Brain microvascular endothelial cell (primary cell): ENCODE measurements at regions of chr22 and their contacts with region 1.

Region 1: DNA sequence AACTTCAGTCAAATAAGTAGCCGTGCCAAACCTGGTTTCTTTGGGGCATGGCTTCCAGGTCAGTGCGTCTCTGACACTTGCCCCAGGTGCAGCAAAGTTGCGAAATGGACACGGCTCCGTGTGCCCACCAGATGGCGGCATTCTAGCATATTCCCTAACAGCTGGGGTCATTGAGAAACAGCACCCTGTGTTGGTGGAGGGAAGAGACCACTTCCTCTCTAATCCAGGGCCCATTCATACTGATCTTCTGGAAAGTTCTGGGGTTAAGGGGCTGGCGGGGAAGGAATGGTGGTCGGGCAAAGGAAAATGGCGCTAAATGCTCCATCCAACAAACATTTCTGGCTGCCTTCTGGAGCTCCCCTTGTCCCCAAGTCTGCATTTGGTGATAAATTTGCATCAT is 141.2 kb upstream of the TIMP3 start:
- DNase-seq: peak; percentile 47
- H3K4me3 ChIP-seq: no peak overlapping the region
- H3K27ac ChIP-seq: peak overlapping the region; percentile 83
- H3K27me3 ChIP-seq: no peaks in the 10 kb centered on the region
- CTCF ChIP-seq: peak; percentile 86

Region 2: DNA sequence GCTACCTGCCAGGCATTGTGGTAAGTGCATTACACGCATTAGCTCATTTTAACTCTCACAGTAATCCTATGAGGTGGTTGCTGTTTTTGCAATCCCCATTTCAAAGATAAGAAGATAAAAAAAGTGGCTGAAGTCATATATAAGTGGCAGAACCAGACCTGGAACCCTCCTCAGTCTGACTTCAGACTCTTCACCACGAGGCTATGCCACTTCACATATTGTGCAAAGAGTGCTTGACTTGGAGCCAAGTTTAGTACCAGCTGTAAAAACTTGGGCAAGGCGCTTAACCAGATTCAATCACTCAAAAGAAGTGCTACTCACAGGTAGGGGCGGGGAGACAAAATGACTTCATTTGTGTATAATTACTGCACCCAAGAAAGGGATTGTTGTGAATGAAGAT is 211.3 kb before region 1 on chr22:
- in situ Hi-C with region 1: no loop called
- DNase-seq: no peak
- H3K4me3 ChIP-seq: no peak overlapping the region
- H3K27ac ChIP-seq: no peak overlapping the region
- H3K27me3 ChIP-seq: no peaks in the 10 kb centered on the region
- CTCF ChIP-seq: no peak

Region 3: DNA sequence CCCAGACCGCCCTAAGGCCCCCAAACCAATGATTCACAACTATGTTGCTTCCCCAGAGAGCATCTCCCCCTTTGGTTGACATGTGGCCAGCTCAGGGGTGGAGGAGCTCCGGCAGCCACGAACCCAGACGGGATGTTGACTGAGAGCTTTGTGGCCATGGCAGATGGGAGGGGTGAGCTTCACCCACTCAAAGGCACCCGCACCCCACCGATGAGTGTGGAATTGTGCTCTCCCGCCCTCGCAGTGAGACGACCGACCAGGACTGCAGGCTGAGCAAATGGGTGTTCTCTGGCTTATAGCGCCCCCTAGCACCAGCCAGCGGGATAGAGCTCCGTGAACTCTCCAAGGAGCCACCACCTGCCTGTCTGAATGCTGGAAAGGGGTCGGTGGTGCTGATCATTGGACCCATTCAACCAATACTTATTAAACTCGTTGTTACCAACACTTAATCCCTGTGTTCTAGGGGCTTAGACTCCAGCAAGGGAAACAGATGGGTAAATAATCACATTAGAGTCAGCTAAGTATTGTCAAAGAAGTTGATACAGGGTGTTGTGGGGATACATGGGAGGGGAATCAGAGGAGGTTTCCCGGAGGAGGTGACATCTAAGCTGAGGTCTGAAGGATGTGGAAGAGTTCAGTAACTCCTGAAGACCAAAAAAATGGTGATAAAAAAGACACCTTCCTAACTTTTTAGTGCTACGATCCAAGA is 136.7 kb after region 1 on chr22:
- in situ Hi-C with region 1: loop called (anchors 25 kb)
- DNase-seq: peak; percentile 69
- H3K4me3 ChIP-seq: no peak overlapping the region
- H3K27ac ChIP-seq: peak overlapping the region; percentile 23
- H3K27me3 ChIP-seq: no peaks in the 10 kb centered on the region
- CTCF ChIP-seq: peak; percentile 96